GM12878 (cell line): ENCODE measurements at regions of chr4 and their contacts with region 1.

Region 1: DNA sequence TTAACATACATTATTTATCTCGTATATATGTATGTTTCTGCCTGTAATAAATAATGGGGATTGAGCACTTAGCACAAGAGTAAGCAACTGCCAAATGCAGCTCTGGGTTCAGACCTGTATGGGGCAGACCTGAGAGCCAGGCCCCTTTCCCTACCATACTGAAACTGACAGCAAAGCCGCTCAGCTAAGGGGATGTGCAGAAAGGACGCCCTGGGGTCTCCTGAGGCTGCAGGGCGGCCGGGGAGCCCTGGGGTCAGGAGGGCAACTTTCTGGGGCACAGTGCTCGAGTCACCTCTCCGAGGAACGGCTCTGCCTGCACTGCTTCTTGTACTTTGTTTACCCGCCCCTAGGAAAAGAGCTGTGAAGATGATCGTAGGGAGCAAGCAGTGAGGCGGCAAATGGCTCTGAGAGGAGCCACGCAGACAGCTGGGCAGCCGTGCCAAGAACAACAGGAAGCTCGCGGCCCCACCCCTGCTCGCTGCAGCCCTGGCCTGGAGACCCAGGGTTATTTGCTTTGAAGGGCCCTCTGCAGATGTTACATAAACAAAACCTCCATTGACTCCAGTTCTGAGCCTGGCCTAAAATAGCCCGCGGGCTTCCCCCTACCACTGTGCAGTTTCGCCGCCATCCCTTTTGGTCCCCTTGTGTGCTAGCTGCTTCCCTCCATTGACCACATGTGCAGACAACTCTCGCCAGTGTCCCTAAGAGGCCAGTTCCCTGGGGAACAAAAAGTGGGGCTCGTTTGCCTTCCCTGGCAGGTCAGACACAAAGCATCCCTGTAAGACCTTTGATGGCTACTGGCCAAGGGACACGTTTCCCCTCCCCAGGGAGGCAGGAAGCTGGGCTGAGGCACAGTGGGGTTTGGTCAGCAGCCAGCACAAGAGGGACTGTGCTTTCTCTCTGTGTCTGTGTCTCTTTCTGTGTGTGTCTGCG is 111.3 kb upstream of the LNX1 start:
- DNase-seq: peak; percentile 88
- ATAC-seq: peak; percentile 80
- H3K4me3 ChIP-seq: peak overlapping the region; percentile 45
- H3K27ac ChIP-seq: peak overlapping the region; percentile 64
- H3K4me1 ChIP-seq: peaks cover 49% of the 10 kb centered on the region
- H3K27me3 ChIP-seq: no peaks in the 10 kb centered on the region
- CTCF ChIP-seq: peak; percentile 32 to 37 (median 35); a peak in 4 of 6 replicates
- EP300 ChIP-seq: peak; percentile 63 to 80; a peak in 2 of 4 replicates
- POLR2A ChIP-seq: peak; percentile 60
- RAD21 ChIP-seq: peak; percentile 24; the same call in 1 of the 2 replicates

Region 2: DNA sequence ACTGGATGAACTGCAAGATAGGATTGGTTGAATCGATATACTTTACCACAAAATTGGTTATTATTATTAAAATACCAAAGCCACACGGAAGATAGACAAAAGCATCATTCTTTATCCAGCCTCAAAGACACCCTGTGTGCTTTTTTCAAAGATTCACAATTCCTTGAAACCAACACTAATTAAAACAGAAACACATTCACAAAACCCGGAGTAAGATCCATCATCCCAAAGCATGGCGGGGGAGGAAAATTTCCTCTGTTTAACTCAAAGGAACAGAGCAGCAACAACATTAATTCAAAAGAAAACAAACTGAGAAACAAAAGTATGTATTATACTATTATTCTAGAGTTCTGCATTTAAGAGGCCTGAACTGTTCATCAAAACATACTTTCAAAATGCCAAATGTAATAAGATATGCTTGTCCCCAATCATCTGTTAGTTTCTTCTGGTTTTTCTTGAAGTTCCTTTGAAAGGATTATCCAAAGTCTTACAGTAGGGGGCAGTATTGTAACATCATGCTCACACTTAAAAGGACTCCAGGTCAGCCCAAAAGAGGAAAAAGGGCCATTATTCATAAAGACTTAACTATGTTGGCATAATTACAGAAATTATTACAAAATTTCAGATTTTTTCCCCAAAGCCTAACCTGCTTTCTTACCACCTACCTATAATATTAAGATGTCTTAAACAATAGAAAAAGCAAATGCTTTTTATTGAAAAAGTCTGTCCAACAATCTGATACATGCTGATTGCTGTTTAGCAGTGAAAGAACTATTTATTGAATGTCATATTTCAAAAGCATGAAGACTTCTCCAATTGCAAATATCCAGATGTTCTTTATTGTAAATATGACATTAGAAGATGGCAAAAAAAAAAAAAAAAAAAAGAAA is 505.5 kb before region 1 on chr4:
- CTCF ChIA-PET with region 1: interaction called, 9 read pairs
- POLR2A ChIA-PET with region 1: no interaction called
- RAD21 ChIA-PET with region 1: no interaction called
- SMC1A ChIA-PET with region 1: interaction called, 4 read pairs
- in situ Hi-C with region 1: no loop called
- intact Hi-C with region 1: loop called (anchors 2 kb)
- DNase-seq: peak; percentile 44
- ATAC-seq: peak; percentile 85
- H3K4me3 ChIP-seq: no peak overlapping the region
- H3K27ac ChIP-seq: no peak overlapping the region
- H3K4me1 ChIP-seq: no peaks in the 10 kb centered on the region
- H3K27me3 ChIP-seq: no peaks in the 10 kb centered on the region
- CTCF ChIP-seq: peak; percentile 53 to 75 (median 64); a peak in 5 of 6 replicates
- EP300 ChIP-seq: no peak
- POLR2A ChIP-seq: no peak
- RAD21 ChIP-seq: peak; percentile 94

Region 3: GRCh38 chr4:53617101-53617680 is 85.4 kb before region 1 on chr4:
- CTCF ChIA-PET with region 1: interaction called, 4 read pairs
- POLR2A ChIA-PET with region 1: no interaction called
- RAD21 ChIA-PET with region 1: interaction called, 5 read pairs
- SMC1A ChIA-PET with region 1: interaction called, 10 read pairs
- in situ Hi-C with region 1: no loop called
- intact Hi-C with region 1: no loop called
- DNase-seq: no peak
- ATAC-seq: peak; percentile 75
- H3K4me3 ChIP-seq: no peak overlapping the region
- H3K27ac ChIP-seq: no peak overlapping the region; the same call in 1 of the 2 replicates
- H3K4me1 ChIP-seq: no peaks in the 10 kb centered on the region
- H3K27me3 ChIP-seq: no peaks in the 10 kb centered on the region
- CTCF ChIP-seq: no peak
- EP300 ChIP-seq: no peak
- POLR2A ChIP-seq: no peak
- RAD21 ChIP-seq: no peak

Region 4: DNA sequence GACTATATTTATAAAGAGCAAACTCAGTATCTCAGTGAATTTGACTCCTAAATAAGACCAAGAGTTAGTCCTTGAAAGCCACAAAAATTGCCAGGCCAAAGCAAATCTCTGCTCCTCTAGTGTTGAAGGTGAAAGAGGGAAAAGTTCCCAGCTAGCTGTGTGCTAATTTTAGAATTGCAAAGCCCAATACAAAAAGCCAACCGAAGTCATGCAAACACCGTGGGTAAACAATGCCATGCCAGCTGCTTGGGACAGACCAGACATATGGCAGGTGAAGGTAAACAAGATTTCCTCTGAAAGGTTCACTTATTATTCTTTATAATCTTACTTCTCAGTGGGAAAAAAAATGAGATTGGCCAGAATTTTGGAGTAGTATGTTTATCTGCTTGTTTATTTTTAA is 30.8 kb before region 1 on chr4:
- CTCF ChIA-PET with region 1: interaction called, 10 read pairs
- POLR2A ChIA-PET with region 1: interaction called, 3 read pairs
- RAD21 ChIA-PET with region 1: no interaction called
- SMC1A ChIA-PET with region 1: interaction called, 5 read pairs
- in situ Hi-C with region 1: no loop called
- intact Hi-C with region 1: no loop called
- DNase-seq: no peak
- ATAC-seq: no peak
- H3K4me3 ChIP-seq: no peak overlapping the region
- H3K27ac ChIP-seq: no peak overlapping the region
- H3K4me1 ChIP-seq: no peaks in the 10 kb centered on the region
- H3K27me3 ChIP-seq: no peaks in the 10 kb centered on the region; a peak in 1 of 4 replicates
- CTCF ChIP-seq: no peak
- EP300 ChIP-seq: no peak
- POLR2A ChIP-seq: no peak
- RAD21 ChIP-seq: no peak

Region 5: DNA sequence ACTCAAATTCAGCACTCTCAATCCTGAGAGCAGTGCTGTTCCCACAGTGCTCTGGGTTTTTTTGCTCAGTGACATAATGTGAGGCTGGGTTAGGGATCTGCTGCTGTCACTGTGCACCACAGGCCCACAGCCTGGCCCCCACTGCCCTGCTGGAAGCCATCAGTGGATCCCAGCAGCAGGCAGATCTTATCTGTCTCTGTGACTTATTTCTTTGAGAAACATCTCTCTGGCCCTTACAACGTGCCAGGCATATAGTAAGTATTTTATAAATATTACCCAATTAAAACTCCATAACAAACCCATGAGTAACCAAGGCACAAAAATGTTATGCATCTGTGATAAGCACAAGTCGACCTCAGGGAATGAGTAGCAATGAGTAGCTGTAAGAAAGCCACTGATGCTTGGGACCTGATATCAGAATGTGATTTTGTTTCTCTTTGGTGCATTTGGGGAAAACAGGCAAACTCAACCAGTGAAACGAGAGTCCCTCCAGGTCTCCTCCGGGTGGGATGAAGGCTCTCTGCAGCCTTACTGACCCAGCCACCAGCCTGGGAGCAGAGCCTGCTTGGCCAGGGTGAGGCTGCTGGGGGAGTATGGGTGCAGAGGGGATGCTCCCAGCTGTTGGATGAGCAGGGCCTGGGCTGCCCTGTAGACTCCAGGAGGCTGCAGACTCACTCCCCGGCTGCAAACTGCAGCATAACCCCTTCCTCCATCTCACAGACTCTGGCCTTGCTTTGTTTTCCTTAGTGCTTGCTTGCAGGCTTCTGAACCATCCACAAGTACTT is 61.4 kb after region 1 on chr4:
- CTCF ChIA-PET with region 1: interaction called, 9 read pairs
- POLR2A ChIA-PET with region 1: no interaction called
- RAD21 ChIA-PET with region 1: interaction called, 10 read pairs
- SMC1A ChIA-PET with region 1: interaction called, 13 read pairs
- in situ Hi-C with region 1: no loop called
- intact Hi-C with region 1: no loop called
- DNase-seq: no peak
- ATAC-seq: peak; percentile 19; the same call in 1 of the 3 replicates
- H3K4me3 ChIP-seq: no peak overlapping the region
- H3K27ac ChIP-seq: no peak overlapping the region
- H3K4me1 ChIP-seq: peaks cover 8% of the 10 kb centered on the region; the same call in 1 of the 2 replicates
- H3K27me3 ChIP-seq: no peaks in the 10 kb centered on the region
- CTCF ChIP-seq: no peak
- EP300 ChIP-seq: no peak
- POLR2A ChIP-seq: no peak
- RAD21 ChIP-seq: no peak

Region 6: DNA sequence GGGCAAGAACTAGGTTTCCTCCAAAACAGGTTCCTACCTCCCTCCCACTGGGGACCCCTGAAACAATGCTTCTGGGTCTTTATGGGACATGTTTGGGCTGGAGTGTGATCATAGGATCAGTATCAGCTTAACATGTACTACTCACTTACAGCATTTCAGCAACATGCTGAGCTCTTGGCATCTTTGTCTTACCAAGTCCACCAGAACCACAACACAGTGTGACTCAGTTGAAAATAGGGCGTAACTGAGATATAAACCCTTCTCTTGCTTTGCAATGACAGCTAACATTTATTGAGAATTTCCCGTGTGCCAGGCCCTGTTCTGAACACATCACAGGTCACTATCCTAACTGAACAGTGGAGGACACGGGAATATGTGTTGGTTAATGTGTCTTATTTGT is 107.2 kb after region 1 on chr4:
- CTCF ChIA-PET with region 1: interaction called, 305 read pairs
- POLR2A ChIA-PET with region 1: interaction called, 4 read pairs
- RAD21 ChIA-PET with region 1: interaction called, 118 read pairs
- SMC1A ChIA-PET with region 1: interaction called, 228 read pairs
- in situ Hi-C with region 1: no loop called
- intact Hi-C with region 1: no loop called
- DNase-seq: no peak
- ATAC-seq: no peak
- H3K4me3 ChIP-seq: no peak overlapping the region
- H3K27ac ChIP-seq: no peak overlapping the region
- H3K4me1 ChIP-seq: no peaks in the 10 kb centered on the region
- H3K27me3 ChIP-seq: no peaks in the 10 kb centered on the region
- CTCF ChIP-seq: no peak
- EP300 ChIP-seq: no peak
- POLR2A ChIP-seq: no peak
- RAD21 ChIP-seq: no peak

Region 7: GRCh38 chr4:53890461-53890860 is 187.9 kb after region 1 on chr4:
- CTCF ChIA-PET with region 1: no interaction called
- POLR2A ChIA-PET with region 1: no interaction called
- RAD21 ChIA-PET with region 1: no interaction called
- SMC1A ChIA-PET with region 1: no interaction called
- in situ Hi-C with region 1: no loop called
- intact Hi-C with region 1: no loop called
- DNase-seq: no peak
- ATAC-seq: no peak
- H3K4me3 ChIP-seq: no peak overlapping the region
- H3K27ac ChIP-seq: no peak overlapping the region
- H3K4me1 ChIP-seq: no peaks in the 10 kb centered on the region
- H3K27me3 ChIP-seq: no peaks in the 10 kb centered on the region
- CTCF ChIP-seq: no peak
- EP300 ChIP-seq: no peak
- POLR2A ChIP-seq: no peak
- RAD21 ChIP-seq: no peak

Region 8: GRCh38 chr4:54228056-54228527 is 525.5 kb after region 1 on chr4:
- CTCF ChIA-PET with region 1: interaction called, 4 read pairs
- POLR2A ChIA-PET with region 1: no interaction called
- RAD21 ChIA-PET with region 1: interaction called, 4 read pairs
- SMC1A ChIA-PET with region 1: no interaction called
- in situ Hi-C with region 1: loop called (anchors 5 kb)
- intact Hi-C with region 1: loop called (anchors 5 kb)
- DNase-seq: no peak
- ATAC-seq: peak; percentile 76
- H3K4me3 ChIP-seq: peak overlapping the region; percentile 54; the same call in 1 of the 2 replicates
- H3K27ac ChIP-seq: no peak overlapping the region
- H3K4me1 ChIP-seq: peaks cover 3% of the 10 kb centered on the region; the same call in 1 of the 2 replicates
- H3K27me3 ChIP-seq: peaks cover 31 to 32% of the 10 kb centered on the region in 2 experiments
- CTCF ChIP-seq: peak; percentile 64 to 83 (median 73)
- EP300 ChIP-seq: no peak; a peak in 1 of 4 replicates
- POLR2A ChIP-seq: no peak
- RAD21 ChIP-seq: peak; percentile 60